Heart left ventricle (tissue), 16 donors: ENCODE measurements at regions of chr4 and their contacts with region 1.

Region 1: DNA sequence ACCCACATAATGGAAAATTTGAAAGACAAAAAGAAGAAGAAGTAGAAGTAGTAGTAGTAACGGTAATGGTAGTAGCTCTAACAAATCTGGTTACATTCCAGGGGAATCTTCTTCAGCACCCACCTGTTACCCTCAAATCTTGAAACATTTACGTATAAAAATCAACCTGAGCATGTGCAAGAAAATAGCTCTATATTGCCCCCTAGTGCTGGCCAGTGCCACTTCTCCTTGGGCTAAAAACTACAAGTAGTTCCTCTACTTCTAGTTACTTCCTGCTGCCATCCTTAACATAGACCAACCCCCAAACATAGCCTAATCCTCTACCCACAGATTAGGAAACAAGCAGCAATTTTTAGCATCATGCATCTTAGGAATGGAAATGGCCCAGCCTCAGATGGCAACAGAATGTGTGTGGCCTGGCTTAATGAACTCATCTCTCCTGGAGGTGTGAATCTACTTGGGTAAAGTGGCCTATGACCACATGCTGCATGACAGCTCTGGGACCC is 3.1 kb downstream of the PDGFC start:
- DNase-seq: peak in 3 of 5 donors; percentile 53 to 57 (median 56)
- ATAC-seq: peak in 3 of 4 donors; percentile 36 to 40 (median 39)
- H3K4me3 ChIP-seq: peak overlapping the region in 5 of 12 donors; percentile 72 to 91 (median 78)
- H3K27ac ChIP-seq: peak overlapping the region in 7 of 12 donors; percentile 1 to 83 (median 15)
- H3K4me1 ChIP-seq: peaks cover 0 to 56% (median 8%) of the 10 kb centered on the region in 12 donors
- H3K27me3 ChIP-seq: peaks cover 0 to 3% (median 0%) of the 10 kb centered on the region in 9 donors
- CTCF ChIP-seq: peak; percentile 62 to 88 (median 75)
- POLR2A ChIP-seq: no peak

Region 2: GRCh38 chr4:156594624-156595023 is 373.9 kb before region 1 on chr4:
- intact Hi-C with region 1: loop called in 1 of 10 experiments (anchors 10 kb)
- DNase-seq: peak; percentile 15 to 77 (median 30)
- ATAC-seq: no peak
- H3K4me3 ChIP-seq: no peak overlapping the region
- H3K27ac ChIP-seq: no peak overlapping the region
- H3K4me1 ChIP-seq: peaks cover 0 to 20% (median 0%) of the 10 kb centered on the region in 12 donors
- H3K27me3 ChIP-seq: no peaks in the 10 kb centered on the region
- CTCF ChIP-seq: no peak
- POLR2A ChIP-seq: no peak

Region 3: DNA sequence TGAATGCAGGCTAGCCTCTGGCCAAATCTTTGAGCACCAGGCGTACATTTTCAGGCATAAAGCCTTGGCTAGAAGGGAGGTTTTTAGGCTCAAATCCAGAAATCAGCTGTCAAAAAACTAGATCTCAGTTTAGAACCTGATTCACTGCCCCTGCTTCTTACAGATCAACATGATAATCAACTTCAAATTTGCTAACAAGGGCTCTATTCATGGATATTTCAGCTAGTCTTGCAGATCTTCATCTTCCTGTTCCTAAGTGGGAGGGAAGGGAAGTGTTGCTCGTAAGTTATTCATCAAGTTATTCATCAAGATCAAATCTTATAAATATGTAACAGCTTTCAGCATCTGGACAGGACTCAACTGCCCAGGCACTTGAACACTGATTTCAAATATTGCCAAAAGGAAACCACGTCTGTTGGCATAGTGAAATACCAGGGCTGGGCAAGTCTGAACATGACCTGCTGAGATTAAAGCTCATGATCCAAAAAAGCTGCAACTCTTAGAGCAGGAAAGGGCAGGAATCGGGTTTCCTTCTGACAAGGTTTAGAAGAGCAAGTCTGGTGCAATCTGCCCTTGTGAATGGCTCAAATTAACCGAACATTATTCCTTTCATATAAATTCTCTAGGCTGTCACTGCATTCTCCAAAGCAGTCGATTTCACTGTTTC is 197.2 kb before region 1 on chr4:
- intact Hi-C with region 1: loop called in 1 of 10 experiments (anchors 10 kb)
- DNase-seq: no peak
- ATAC-seq: peak in 3 of 4 donors; percentile 20 to 67 (median 32)
- H3K4me3 ChIP-seq: peak overlapping the region in 8 of 12 donors; percentile 1 to 35 (median 4)
- H3K27ac ChIP-seq: peak overlapping the region in 5 of 12 donors; percentile 5 to 58 (median 22)
- H3K4me1 ChIP-seq: peaks cover 0 to 61% (median 20%) of the 10 kb centered on the region in 12 donors
- H3K27me3 ChIP-seq: no peaks in the 10 kb centered on the region
- CTCF ChIP-seq: no peak
- POLR2A ChIP-seq: no peak

Region 4: DNA sequence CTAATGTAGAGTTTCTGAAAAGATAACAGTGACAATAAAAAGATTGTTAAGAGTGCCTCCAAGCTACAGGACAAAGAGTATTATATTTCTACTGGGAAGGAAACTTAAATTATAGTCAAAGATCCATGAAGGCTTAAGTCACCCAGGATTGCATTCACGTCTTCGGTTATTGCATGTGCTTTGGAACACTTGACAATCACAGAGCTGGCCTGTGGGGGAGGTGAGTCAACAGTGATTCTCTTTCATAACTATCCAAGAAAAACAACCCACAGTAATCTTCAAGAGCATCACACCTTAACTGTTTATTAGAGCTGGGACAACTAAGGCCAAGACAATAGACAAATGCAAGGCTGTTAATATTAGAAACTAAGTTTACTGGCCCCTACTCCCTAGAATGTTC is 37.3 kb before region 1 on chr4:
- intact Hi-C with region 1: no loop called
- DNase-seq: no peak
- ATAC-seq: no peak
- H3K4me3 ChIP-seq: no peak overlapping the region
- H3K27ac ChIP-seq: no peak overlapping the region
- H3K4me1 ChIP-seq: peaks cover 0 to 2% (median 0%) of the 10 kb centered on the region in 12 donors
- H3K27me3 ChIP-seq: no peaks in the 10 kb centered on the region
- CTCF ChIP-seq: no peak
- POLR2A ChIP-seq: no peak

Region 5: DNA sequence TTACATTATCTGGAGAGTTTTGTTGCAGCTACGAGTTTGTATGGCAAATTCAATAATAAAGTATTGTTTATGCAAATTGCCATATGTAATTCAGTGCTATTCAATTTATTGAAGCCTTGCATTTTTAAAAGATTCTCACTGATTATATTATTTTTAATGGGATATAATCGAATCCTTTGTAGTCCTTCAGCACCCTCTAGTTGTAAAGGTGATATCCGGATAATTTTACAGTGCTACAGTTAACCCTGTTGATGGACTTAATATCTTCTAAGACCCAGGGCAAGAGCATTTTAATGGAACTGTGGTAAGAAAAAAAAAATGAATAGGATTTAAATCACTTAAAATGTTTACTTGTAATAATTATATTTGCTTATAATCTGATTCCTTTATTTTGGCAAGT is 203.5 kb after region 1 on chr4:
- intact Hi-C with region 1: no loop called
- DNase-seq: no peak
- ATAC-seq: no peak
- H3K4me3 ChIP-seq: no peak overlapping the region
- H3K27ac ChIP-seq: no peak overlapping the region
- H3K4me1 ChIP-seq: no peaks in the 10 kb centered on the region
- H3K27me3 ChIP-seq: no peaks in the 10 kb centered on the region
- CTCF ChIP-seq: peak in 1 of 12 donors; percentile 10
- POLR2A ChIP-seq: no peak